Activated T-helper 2 cell treated with anti-CD3 and anti-CD28 coated beads, Interferon-gamma antibody, Interleukin-2, Interleukin-4, amounts not matched to agents 10 μg/mL and 5 μg/mL and 100 μg/mL, durations not matched to agents 14 hours and 24 hours and 36 hours (primary cell): ENCODE measurements at regions of chr4 and their contacts with region 1.

Region 1: GRCh38 chr4:42371306-42372252 is 25.7 kb upstream of the SHISA3 start:
- DNase-seq: no peak
- H3K4me3 Mint-ChIP-seq: no peak overlapping the region
- H3K27ac Mint-ChIP-seq: no peak overlapping the region
- H3K4me1 Mint-ChIP-seq: no peaks in the 10 kb centered on the region
- H3K27me3 Mint-ChIP-seq: peaks cover 8% of the 10 kb centered on the region

Region 2: GRCh38 chr4:41221850-41222645 is 1149.5 kb before region 1 on chr4:
- intact Hi-C with region 1: no loop called
- DNase-seq: no peak
- H3K4me3 Mint-ChIP-seq: no peak overlapping the region
- H3K27ac Mint-ChIP-seq: no peak overlapping the region
- H3K4me1 Mint-ChIP-seq: peaks cover under 1% of the 10 kb centered on the region
- H3K27me3 Mint-ChIP-seq: peaks cover 32% of the 10 kb centered on the region

Region 3: GRCh38 chr4:42112846-42113245 is 258.7 kb before region 1 on chr4:
- intact Hi-C with region 1: no loop called
- DNase-seq: no peak
- H3K4me3 Mint-ChIP-seq: no peak overlapping the region
- H3K27ac Mint-ChIP-seq: no peak overlapping the region
- H3K4me1 Mint-ChIP-seq: no peaks in the 10 kb centered on the region
- H3K27me3 Mint-ChIP-seq: no peaks in the 10 kb centered on the region

Region 4: GRCh38 chr4:42519803-42520417 is 148.3 kb after region 1 on chr4:
- intact Hi-C with region 1: loop called (anchors 1 kb)
- DNase-seq: no peak
- H3K4me3 Mint-ChIP-seq: no peak overlapping the region
- H3K27ac Mint-ChIP-seq: no peak overlapping the region
- H3K4me1 Mint-ChIP-seq: peaks cover 4% of the 10 kb centered on the region
- H3K27me3 Mint-ChIP-seq: no peaks in the 10 kb centered on the region

Region 5: GRCh38 chr4:42643685-42644084 is 272.1 kb after region 1 on chr4:
- intact Hi-C with region 1: no loop called
- DNase-seq: no peak
- H3K4me3 Mint-ChIP-seq: no peak overlapping the region
- H3K27ac Mint-ChIP-seq: no peak overlapping the region
- H3K4me1 Mint-ChIP-seq: peaks cover 45% of the 10 kb centered on the region
- H3K27me3 Mint-ChIP-seq: no peaks in the 10 kb centered on the region